Prostate gland (tissue), 2 donors: ENCODE measurements at regions of chr1 and their contacts with region 1.

Region 1: GRCh38 chr1:182143154-182143657 is 81.7 kb upstream of the ZNF648 start:
- DNase-seq: peak; percentile 92
- H3K4me3 ChIP-seq: no peak overlapping the region
- H3K27ac ChIP-seq: peak overlapping the region; percentile 88 to 92
- H3K4me1 ChIP-seq: peaks cover 21% of the 10 kb centered on the region
- H3K27me3 ChIP-seq: no peaks in the 10 kb centered on the region
- CTCF ChIP-seq: peak; percentile 93 to 99 (median 96)
- POLR2A ChIP-seq: no peak

Region 2: GRCh38 chr1:182084487-182085316 is 58.5 kb before region 1 on chr1:
- intact Hi-C with region 1: loop called (anchors 5 kb)
- DNase-seq: peak; percentile 85
- H3K4me3 ChIP-seq: no peak overlapping the region
- H3K27ac ChIP-seq: peak overlapping the region in 1 of 2 donors; percentile 53
- H3K4me1 ChIP-seq: no peaks in the 10 kb centered on the region
- H3K27me3 ChIP-seq: no peaks in the 10 kb centered on the region
- CTCF ChIP-seq: peak; percentile 73 to 96 (median 88)
- POLR2A ChIP-seq: no peak

Region 3: GRCh38 chr1:182206626-182207239 is 63.5 kb after region 1 on chr1:
- intact Hi-C with region 1: loop called (anchors 5 kb)
- DNase-seq: no peak
- H3K4me3 ChIP-seq: no peak overlapping the region
- H3K27ac ChIP-seq: peak overlapping the region; percentile 3 to 37
- H3K4me1 ChIP-seq: no peaks in the 10 kb centered on the region
- H3K27me3 ChIP-seq: no peaks in the 10 kb centered on the region
- CTCF ChIP-seq: no peak
- POLR2A ChIP-seq: no peak

Region 4: DNA sequence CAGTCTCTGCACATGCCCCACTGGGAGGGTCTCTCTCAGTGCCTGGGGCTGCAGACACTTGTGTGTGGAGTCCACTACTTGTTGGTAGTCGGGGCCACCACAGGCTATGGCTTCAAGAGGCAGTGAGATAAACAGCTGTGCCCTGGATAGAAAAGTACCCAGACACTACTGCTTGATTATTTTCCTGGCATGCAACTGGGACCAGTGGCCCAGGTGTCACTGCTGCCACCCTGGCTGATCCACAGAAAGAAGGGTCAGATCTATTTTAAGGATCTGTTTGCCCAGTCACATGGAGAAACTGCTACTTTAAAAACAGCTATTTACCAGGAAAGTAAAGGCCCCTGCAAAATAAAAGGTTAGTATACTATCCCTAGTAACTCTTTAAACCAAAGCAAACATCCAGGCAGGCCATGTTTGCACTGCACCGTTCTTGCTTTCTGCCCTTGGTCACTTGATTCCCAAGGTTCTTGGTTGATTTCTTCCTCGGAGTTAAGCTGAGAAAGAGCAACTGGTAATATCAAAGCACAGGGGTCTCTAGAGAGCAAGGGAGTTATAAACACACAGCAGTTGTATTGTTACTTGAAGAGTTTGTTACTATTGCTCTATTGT is 148.5 kb after region 1 on chr1:
- intact Hi-C with region 1: loop called (anchors 2 kb)
- DNase-seq: no peak
- H3K4me3 ChIP-seq: no peak overlapping the region
- H3K27ac ChIP-seq: no peak overlapping the region
- H3K4me1 ChIP-seq: no peaks in the 10 kb centered on the region
- H3K27me3 ChIP-seq: no peaks in the 10 kb centered on the region
- CTCF ChIP-seq: no peak
- POLR2A ChIP-seq: no peak

Region 5: GRCh38 chr1:182391362-182392044 is 248.3 kb after region 1 on chr1 and contains the start of gene GLUL:
- intact Hi-C with region 1: loop called (anchors 2 kb)
- DNase-seq: peak; percentile 94
- H3K4me3 ChIP-seq: peak within 1 kb of the TSS; percentile 56 to 90
- H3K27ac ChIP-seq: peak within 1 kb of the TSS; percentile 97 to 99
- H3K4me1 ChIP-seq: no peaks in the 10 kb centered on the region
- H3K27me3 ChIP-seq: no peaks in the 10 kb centered on the region
- CTCF ChIP-seq: peak in 2 of 4 experiments; percentile 3 to 4
- POLR2A ChIP-seq: peak; percentile 98
- total RNA-seq, gene GLUL: 538 to 1,389 TPM

Region 6: GRCh38 chr1:182588500-182589452 is 445.6 kb after region 1 on chr1 and contains the start of gene RNASEL:
- intact Hi-C with region 1: loop called (anchors 5 kb)
- DNase-seq: peak; percentile 76
- H3K4me3 ChIP-seq: peak within 1 kb of the TSS; percentile 60 to 69
- H3K27ac ChIP-seq: peak within 1 kb of the TSS; percentile 95 to 98
- H3K4me1 ChIP-seq: no peaks in the 10 kb centered on the region
- H3K27me3 ChIP-seq: no peaks in the 10 kb centered on the region
- CTCF ChIP-seq: peak in 1 of 4 experiments; percentile 13
- POLR2A ChIP-seq: peak; percentile 50
- total RNA-seq, gene RNASEL: 7.6 to 10.7 TPM

Region 7: DNA sequence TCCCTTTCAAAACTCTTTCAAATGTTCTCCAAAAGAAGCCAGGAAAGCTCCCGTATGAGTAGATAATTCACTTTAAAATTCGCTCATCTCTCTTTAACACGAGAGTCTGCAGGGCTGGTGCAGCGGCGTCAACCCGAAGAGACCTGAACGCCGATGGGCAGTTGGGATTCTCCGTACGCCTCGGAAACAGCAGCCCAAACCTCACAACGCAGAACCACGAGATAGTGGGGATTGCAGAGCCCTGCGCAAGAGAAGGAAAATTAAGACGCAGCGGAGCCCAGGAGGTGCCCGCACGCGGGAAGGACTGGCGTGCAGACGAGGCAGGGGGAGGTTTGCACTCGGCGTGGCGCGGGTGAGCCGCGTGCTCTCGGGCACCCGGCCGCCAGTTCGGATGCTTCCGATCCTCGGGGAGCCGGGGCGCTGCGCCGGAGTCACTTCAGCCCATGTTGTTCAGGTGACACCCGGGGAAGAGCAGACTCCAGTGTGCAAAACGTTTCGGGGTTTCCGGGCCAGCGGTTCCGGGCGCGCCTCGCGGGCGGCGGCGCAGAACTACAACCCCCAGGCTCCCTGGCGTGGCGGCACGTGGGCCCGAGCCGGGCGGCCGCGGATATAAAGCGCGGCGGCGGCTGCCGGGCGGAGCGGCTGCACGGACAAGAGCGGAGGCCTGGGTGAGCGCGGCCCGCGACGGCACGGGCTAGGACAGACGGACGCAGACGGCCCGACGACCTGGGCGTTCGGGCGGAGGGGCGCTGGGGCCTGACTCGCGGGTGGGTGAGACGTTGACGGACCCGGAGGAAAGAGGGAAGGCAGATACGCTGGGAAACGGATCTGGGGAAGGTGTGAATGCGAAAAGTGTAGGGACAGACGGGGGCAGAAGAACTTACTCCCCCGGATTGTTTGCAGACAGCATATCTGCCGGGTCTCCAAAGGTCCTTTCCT is 646.2 kb after region 1 on chr1 and contains the start of gene NPL:
- intact Hi-C with region 1: loop called (anchors 10 kb)
- DNase-seq: peak; percentile 77
- H3K4me3 ChIP-seq: peak within 1 kb of the TSS; percentile 50
- H3K27ac ChIP-seq: peak within 1 kb of the TSS; percentile 10 to 63
- H3K4me1 ChIP-seq: no peaks in the 10 kb centered on the region
- H3K27me3 ChIP-seq: no peaks in the 10 kb centered on the region
- CTCF ChIP-seq: peak in 1 of 4 experiments; percentile 18
- POLR2A ChIP-seq: peak; percentile 89
- total RNA-seq, gene NPL: 2.2 to 6.8 TPM